ENCODE measurements at regions of chr11 and their contacts with region 1.

Region 1: GRCh38 chr11:62905927-62906531 is 15.1 kb downstream of the CHRM1 start:
- DNase-seq: peak; percentile 64
- ATAC-seq: peak; percentile 77
- H3K4me3 ChIP-seq: no peak overlapping the region
- H3K27ac ChIP-seq: no peak overlapping the region
- H3K4me1 ChIP-seq: peaks cover 14% of the 10 kb centered on the region
- H3K27me3 ChIP-seq: peaks cover 2 to 35% of the 10 kb centered on the region in 2 experiments; a peak in 2 of 5 replicates
- CTCF ChIP-seq: peak; percentile 99
- EP300 ChIP-seq: no peak
- POLR2A ChIP-seq: no peak
- RAD21 ChIP-seq: peak; percentile 90

Region 2: GRCh38 chr11:62855571-62856332 is 50.3 kb before region 1 on chr11:
- CTCF ChIA-PET with region 1: no interaction called
- POLR2A ChIA-PET with region 1: no interaction called
- in situ Hi-C with region 1: no loop called
- intact Hi-C with region 1: no loop called
- DNase-seq: peak; percentile 97
- ATAC-seq: peak; percentile 79
- H3K4me3 ChIP-seq: peak overlapping the region; percentile 86 to 96 (median 94)
- H3K27ac ChIP-seq: peak overlapping the region; percentile 91
- H3K4me1 ChIP-seq: peaks cover 77% of the 10 kb centered on the region
- H3K27me3 ChIP-seq: no peaks in the 10 kb centered on the region; a peak in 1 of 5 replicates
- CTCF ChIP-seq: peak; percentile 23; the same call in 1 of the 2 replicates
- EP300 ChIP-seq: 0 out of 4 replicates have a peak, but pooled peaks of 1 of the 2 experiments have one; percentile 8
- POLR2A ChIP-seq: peak; percentile 99 to 100
- RAD21 ChIP-seq: peak; percentile 16; the same call in 1 of the 2 replicates

Region 3: DNA sequence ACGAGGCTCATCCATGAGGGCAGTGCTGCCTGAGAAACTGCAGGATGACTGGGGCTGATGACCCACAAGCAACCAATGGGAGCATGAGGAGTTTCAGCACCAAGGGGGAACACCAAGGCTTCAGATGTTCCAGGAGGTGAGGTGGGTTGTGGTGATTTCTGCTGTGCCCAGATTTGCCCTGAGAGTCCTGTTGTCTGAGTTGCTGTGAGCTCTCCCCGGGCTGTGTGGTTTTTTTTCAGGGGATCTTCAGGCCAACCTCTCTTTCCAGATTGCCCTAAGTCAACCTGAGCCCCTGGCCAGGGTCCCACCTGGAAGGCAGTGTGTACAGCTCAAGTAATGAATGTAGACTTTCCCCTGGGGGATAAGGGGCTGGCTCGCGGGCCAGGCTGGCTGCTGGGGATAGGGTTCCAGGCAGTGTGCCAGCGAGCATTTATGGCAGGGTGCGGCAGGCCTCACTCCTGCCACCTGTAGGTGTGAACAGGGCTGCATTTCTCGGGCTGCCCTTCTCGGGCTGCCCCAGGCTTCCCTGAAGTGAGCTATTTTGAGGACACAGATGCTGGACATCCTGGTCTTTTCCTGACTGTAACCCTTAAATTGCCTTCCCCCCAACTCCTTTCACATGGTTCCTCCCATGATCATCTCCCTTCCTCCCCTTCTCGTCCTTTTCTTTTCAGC is 69.0 kb after region 1 on chr11:
- CTCF ChIA-PET with region 1: interaction called, 7 read pairs
- POLR2A ChIA-PET with region 1: no interaction called
- in situ Hi-C with region 1: loop called (anchors 5 kb)
- intact Hi-C with region 1: loop called (anchors 1 kb)
- DNase-seq: peak; percentile 6
- ATAC-seq: peak; percentile 95
- H3K4me3 ChIP-seq: no peak overlapping the region
- H3K27ac ChIP-seq: no peak overlapping the region
- H3K4me1 ChIP-seq: no peaks in the 10 kb centered on the region
- H3K27me3 ChIP-seq: peaks cover 4 to 7% of the 10 kb centered on the region in 2 experiments; a peak in 2 of 5 replicates
- CTCF ChIP-seq: peak; percentile 60
- EP300 ChIP-seq: no peak
- POLR2A ChIP-seq: no peak
- RAD21 ChIP-seq: 0 out of 2 replicates have a peak, but pooled peaks have one; percentile 34

Region 4: DNA sequence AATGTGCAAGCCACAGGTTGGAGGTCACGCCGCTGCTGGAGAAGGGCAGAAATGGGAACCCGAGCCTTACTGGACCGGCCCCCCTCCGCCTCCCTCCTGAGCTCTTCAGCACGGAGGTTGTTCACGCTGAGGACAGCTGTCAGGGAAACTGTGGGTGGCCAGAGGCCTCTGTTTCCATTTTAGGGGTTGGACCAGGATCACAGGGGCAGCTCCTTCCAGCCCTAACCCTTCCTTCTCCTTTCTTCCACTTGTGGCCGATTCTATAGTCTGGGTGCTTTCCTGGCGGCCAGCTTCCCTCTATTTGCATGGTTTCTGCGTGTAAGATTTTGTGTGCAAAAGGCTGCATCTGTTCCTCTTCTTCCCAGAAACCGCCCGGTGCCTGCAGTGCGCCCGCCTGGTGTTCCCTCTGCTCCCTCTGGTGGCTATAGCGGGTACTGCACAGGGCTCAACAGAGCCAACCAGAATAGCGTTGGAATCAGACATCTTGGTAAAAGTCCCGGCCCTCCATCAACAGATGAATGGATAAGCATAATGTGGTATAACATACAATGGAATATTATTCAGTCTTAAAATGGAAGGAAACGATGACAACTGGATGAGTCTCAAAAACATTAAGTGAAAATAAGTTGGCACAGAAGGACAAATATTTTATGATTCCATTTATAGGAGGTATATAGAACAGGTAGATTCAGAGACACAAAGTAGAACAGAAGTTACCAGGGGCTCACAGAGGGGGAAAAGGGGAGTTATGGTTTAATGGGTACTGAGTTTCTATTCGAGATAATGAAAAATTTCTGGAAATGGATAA is 118.0 kb after region 1 on chr11:
- CTCF ChIA-PET with region 1: interaction called, 132 read pairs
- POLR2A ChIA-PET with region 1: interaction called, 6 read pairs
- in situ Hi-C with region 1: loop called (anchors 5 kb)
- intact Hi-C with region 1: loop called (anchors 1 kb)
- DNase-seq: peak; percentile 55
- ATAC-seq: peak; percentile 85
- H3K4me3 ChIP-seq: no peak overlapping the region
- H3K27ac ChIP-seq: no peak overlapping the region
- H3K4me1 ChIP-seq: peaks cover 10% of the 10 kb centered on the region; the same call in 1 of the 2 replicates
- H3K27me3 ChIP-seq: peaks cover 3 to 11% of the 10 kb centered on the region in 2 experiments; a peak in 3 of 5 replicates
- CTCF ChIP-seq: peak; percentile 94
- EP300 ChIP-seq: no peak
- POLR2A ChIP-seq: no peak
- RAD21 ChIP-seq: peak; percentile 78

Region 5: DNA sequence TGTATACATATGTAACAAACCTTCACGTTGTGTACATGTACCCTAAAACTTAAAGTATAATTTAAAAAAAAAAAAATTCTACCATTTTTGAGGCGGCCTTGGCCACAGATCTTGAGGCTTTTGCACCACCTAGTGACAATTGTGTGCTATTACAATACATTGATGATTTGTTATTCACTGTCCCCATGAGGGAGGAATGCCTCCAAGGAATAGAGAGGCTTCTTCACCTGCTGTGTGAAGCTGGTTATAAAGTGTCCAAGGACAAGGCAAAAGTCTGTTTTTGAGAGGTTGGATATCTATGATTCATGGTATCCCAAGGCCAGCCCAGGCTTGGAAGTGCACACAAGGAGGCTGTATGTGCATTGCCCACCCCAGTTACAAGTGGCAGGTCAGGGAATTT is 306.7 kb after region 1 on chr11:
- CTCF ChIA-PET with region 1: no interaction called
- POLR2A ChIA-PET with region 1: no interaction called
- in situ Hi-C with region 1: loop called (anchors 25 kb)
- intact Hi-C with region 1: loop called (anchors 5 kb)
- DNase-seq: peak; percentile 10
- ATAC-seq: no peak
- H3K4me3 ChIP-seq: no peak overlapping the region
- H3K27ac ChIP-seq: no peak overlapping the region
- H3K4me1 ChIP-seq: peaks cover 22% of the 10 kb centered on the region
- H3K27me3 ChIP-seq: no peaks in the 10 kb centered on the region
- CTCF ChIP-seq: peak; percentile 42
- EP300 ChIP-seq: no peak
- POLR2A ChIP-seq: no peak
- RAD21 ChIP-seq: 0 out of 2 replicates have a peak, but pooled peaks have one; percentile 17

Region 6: DNA sequence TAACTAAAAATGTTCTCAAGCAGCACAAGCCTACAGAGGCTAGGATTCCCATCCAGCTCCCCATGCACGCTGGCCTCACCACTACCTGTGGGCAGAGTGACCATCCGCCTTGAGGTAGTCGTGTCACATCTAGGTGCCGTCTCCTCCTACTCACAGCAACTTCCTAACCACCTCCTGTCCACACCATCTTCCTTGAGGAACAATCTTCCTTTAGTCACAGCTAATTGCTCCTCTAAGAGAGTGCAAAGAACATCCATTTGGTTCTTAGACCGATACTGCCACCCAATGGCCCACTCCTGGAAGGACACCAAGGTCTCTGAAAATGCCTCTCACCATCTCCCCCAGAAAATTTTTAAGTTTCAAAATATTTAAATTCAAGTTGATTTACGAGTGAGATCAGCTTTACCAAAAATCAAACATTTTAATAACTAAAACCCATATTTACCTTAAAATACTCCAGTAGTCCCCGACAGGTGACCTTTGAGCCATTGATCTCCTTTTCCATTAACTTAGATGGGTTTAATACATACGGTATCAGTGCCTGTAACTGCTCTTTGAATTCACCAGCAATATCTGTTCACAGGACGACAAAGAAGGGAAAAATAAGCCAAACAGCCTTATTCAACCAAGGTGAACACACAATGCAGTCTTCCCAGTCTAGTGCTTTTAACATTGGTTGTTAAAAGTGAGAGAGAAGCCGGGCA is 729.9 kb after region 1 on chr11:
- CTCF ChIA-PET with region 1: no interaction called
- POLR2A ChIA-PET with region 1: no interaction called
- in situ Hi-C with region 1: no loop called
- intact Hi-C with region 1: loop called (anchors 5 kb)
- DNase-seq: peak; percentile 47
- ATAC-seq: peak; percentile 77
- H3K4me3 ChIP-seq: no peak overlapping the region
- H3K27ac ChIP-seq: no peak overlapping the region
- H3K4me1 ChIP-seq: peaks cover 6% of the 10 kb centered on the region; the same call in 1 of the 2 replicates
- H3K27me3 ChIP-seq: no peaks in the 10 kb centered on the region; a peak in 2 of 5 replicates
- CTCF ChIP-seq: peak; percentile 89
- EP300 ChIP-seq: no peak
- POLR2A ChIP-seq: no peak
- RAD21 ChIP-seq: peak; percentile 88

Measured in HepG2 (cell line).